ENCODE measurements at regions of chr22 and their contacts with region 1.

Region 1: GRCh38 chr22:46071451-46072109 is 78.7 kb upstream of the PPARA start:
- DNase-seq: peak; percentile 96
- ATAC-seq: peak; percentile 43

Region 2: DNA sequence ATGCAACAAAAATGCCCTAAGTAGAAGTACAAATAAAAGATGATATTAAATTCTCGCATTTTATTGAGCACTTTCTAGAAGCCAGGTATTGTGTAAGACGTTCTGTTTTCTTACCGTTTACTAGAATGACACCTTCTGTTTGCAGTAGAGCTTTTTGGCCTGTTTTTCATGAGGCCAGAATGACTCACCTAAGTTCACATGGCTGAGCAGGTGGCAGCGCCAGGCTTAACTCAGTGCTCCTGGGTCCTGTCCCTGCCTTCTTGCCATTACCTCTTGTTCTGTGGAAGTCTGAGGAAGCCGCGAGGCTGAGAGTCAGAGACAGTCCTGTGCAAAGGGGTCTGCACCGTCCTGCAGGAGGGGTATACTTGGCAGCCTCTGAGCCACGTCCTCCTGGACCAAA is 286.1 kb before region 1 on chr22:
- intact Hi-C with region 1: no loop called
- DNase-seq: no peak
- ATAC-seq: no peak

Region 3: GRCh38 chr22:46013460-46014416 is 57.8 kb before region 1 on chr22:
- intact Hi-C with region 1: loop called (anchors 5 kb)
- DNase-seq: peak; percentile 95
- ATAC-seq: peak; percentile 93

Region 4: DNA sequence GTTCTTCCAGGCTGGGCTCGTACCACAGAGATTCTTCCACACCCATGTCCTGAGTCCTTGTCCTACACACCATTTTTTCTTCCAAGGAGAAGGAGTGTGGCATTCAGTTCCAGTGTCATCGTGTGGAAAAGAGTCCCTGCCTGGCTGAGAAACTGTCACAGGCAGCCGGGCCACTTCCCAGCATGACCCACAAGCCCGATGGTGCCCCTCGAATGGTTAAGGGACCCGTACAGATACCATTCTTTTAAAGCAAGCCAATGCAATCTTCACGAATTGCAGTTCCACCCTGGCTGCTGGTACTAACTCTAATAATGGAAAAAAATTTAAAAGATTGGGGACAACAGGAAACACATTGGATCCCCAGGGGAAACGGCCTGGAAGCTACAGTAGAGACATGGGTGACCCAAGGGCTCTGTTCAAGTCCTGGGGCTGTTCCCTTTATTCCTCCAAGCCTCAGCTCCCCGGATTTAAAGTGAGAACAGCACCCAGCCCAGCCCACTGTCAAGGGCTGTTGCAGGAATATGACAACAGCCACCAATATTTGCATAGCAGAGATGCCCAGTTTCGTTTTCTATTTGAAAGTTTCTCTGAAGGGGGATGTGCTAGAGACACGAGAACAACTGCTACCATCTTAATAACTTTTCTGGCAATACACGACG is 13.7 kb before region 1 on chr22:
- intact Hi-C with region 1: loop called (anchors 1 kb)
- DNase-seq: no peak
- ATAC-seq: peak; percentile 24